Vagina (tissue), 2 donors: ENCODE measurements at regions of chr11 and their contacts with region 1.

Region 1: GRCh38 chr11:5899519-5899918 is 6.5 kb downstream of the OR52E5 start:
- DNase-seq: no peak
- H3K4me3 ChIP-seq: no peak overlapping the region
- H3K27ac ChIP-seq: no peak overlapping the region
- H3K4me1 ChIP-seq: no peaks in the 10 kb centered on the region
- H3K27me3 ChIP-seq: no peaks in the 10 kb centered on the region
- CTCF ChIP-seq: no peak
- POLR2A ChIP-seq: no peak

Region 2: DNA sequence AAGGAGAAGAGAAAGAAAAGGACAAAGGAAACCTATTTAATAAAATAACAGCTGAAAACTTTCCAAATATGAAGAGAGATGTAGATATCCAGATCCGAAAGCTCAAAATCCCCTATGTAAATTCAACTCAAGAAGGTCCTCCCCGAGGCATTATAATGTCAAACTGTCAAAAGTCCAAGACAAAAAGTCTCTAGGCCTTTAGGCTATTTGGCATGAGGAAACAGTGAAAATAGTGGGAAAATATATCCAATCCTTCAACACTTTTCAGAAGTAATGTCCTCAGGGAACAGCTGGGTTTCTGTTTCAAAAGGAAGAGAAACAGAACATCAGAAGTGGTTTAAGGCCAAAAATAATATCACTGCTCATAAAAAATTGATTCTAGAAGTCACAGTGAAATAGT is 21.0 kb before region 1 on chr11:
- intact Hi-C with region 1: loop called (anchors 1 kb)
- DNase-seq: no peak
- H3K4me3 ChIP-seq: no peak overlapping the region
- H3K27ac ChIP-seq: no peak overlapping the region
- H3K4me1 ChIP-seq: no peaks in the 10 kb centered on the region
- H3K27me3 ChIP-seq: no peaks in the 10 kb centered on the region
- CTCF ChIP-seq: no peak
- POLR2A ChIP-seq: no peak

Region 3: GRCh38 chr11:5955586-5955985 is 56.1 kb after region 1 on chr11:
- intact Hi-C with region 1: no loop called
- DNase-seq: no peak
- H3K4me3 ChIP-seq: no peak overlapping the region
- H3K27ac ChIP-seq: no peak overlapping the region
- H3K4me1 ChIP-seq: no peaks in the 10 kb centered on the region
- H3K27me3 ChIP-seq: no peaks in the 10 kb centered on the region
- CTCF ChIP-seq: no peak
- POLR2A ChIP-seq: no peak